ENCODE measurements at regions of chr4 and their contacts with region 1.

Region 1: GRCh38 chr4:122758033-122758432 is 25.5 kb downstream of the BBS12 start:
- DNase-seq: peak in 3 of 4 experiments; percentile 28 to 72 (median 37)
- ATAC-seq: peak; percentile 46
- H3K4me3 ChIP-seq: no peak overlapping the region
- H3K27ac ChIP-seq: peak overlapping the region; percentile 59; the same call in 2 of the 3 replicates
- H3K4me1 ChIP-seq: peaks cover 0 to 11% of the 10 kb centered on the region in 2 experiments; a peak in 3 of 5 replicates
- H3K27me3 ChIP-seq: no peaks in the 10 kb centered on the region
- CTCF ChIP-seq: peak; percentile 47 to 75 (median 53); a peak in 4 of 6 replicates
- EP300 ChIP-seq: no peak
- POLR2A ChIP-seq: no peak
- RAD21 ChIP-seq: peak; percentile 78 to 81

Region 2: GRCh38 chr4:122434285-122434684 is 323.7 kb before region 1 on chr4:
- CTCF ChIA-PET with region 1: no interaction called
- POLR2A ChIA-PET with region 1: no interaction called
- in situ Hi-C with region 1: no loop called
- intact Hi-C with region 1: no loop called
- DNase-seq: no peak
- ATAC-seq: no peak
- H3K4me3 ChIP-seq: no peak overlapping the region
- H3K27ac ChIP-seq: no peak overlapping the region
- H3K4me1 ChIP-seq: no peaks in the 10 kb centered on the region
- H3K27me3 ChIP-seq: no peaks in the 10 kb centered on the region; a peak in 2 of 5 replicates
- CTCF ChIP-seq: no peak
- EP300 ChIP-seq: no peak
- POLR2A ChIP-seq: no peak
- RAD21 ChIP-seq: no peak

Region 3: DNA sequence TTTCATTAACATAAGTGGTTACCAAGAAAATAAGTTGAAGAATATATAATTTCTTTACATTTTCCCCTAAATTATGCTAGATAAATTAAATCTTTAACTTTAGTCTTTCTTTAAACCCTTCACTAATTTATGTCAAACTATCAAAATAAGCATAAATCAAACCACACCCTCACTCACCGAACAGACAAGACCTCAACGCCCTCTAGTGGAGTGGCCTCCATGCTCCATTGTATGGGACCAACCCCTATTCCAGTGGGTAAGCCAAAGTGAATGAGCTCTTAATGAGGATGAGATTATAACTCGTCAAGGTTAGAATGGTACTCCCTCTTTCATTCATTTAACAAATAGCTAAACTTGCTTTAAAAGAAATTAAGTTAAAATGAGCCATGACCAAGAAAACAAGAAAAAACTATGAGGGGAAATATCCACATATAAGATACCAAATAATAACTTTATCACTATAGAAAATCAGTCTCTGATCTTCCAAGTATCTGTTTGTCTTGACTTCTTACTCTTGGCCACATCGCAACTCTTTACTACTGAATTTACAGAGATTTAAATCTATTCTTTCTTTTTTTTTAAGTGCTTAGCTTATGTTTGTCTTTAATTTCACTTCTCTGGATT is 41.1 kb before region 1 on chr4:
- CTCF ChIA-PET with region 1: no interaction called
- POLR2A ChIA-PET with region 1: no interaction called
- in situ Hi-C with region 1: no loop called
- intact Hi-C with region 1: loop called (anchors 5 kb)
- DNase-seq: peak; percentile 75 to 87 (median 80)
- ATAC-seq: peak; percentile 96
- H3K4me3 ChIP-seq: no peak overlapping the region
- H3K27ac ChIP-seq: no peak overlapping the region
- H3K4me1 ChIP-seq: peaks cover 1 to 16% of the 10 kb centered on the region in 2 experiments
- H3K27me3 ChIP-seq: no peaks in the 10 kb centered on the region
- CTCF ChIP-seq: peak; percentile 77 to 90 (median 89)
- EP300 ChIP-seq: no peak
- POLR2A ChIP-seq: no peak
- RAD21 ChIP-seq: peak; percentile 82 to 87

Region 4: GRCh38 chr4:122914292-122914904 is 156.4 kb after region 1 on chr4:
- CTCF ChIA-PET with region 1: interaction called, 8 read pairs
- POLR2A ChIA-PET with region 1: no interaction called
- in situ Hi-C with region 1: no loop called
- intact Hi-C with region 1: loop called (anchors 1 kb)
- DNase-seq: peak in 1 of 4 experiments; percentile 35
- ATAC-seq: peak; percentile 88
- H3K4me3 ChIP-seq: no peak overlapping the region
- H3K27ac ChIP-seq: no peak overlapping the region; the same call in 2 of the 3 replicates
- H3K4me1 ChIP-seq: no peaks in the 10 kb centered on the region
- H3K27me3 ChIP-seq: no peaks in the 10 kb centered on the region
- CTCF ChIP-seq: peak; percentile 32 to 65 (median 33); a peak in 3 of 6 replicates
- EP300 ChIP-seq: no peak
- POLR2A ChIP-seq: no peak
- RAD21 ChIP-seq: peak; percentile 69 to 77

Region 5: GRCh38 chr4:122922877-122923511 is 165.0 kb after region 1 on chr4:
- CTCF ChIA-PET with region 1: no interaction called
- POLR2A ChIA-PET with region 1: interaction called, 3 read pairs
- in situ Hi-C with region 1: loop called (anchors 5 kb)
- intact Hi-C with region 1: loop called (anchors 2 kb)
- DNase-seq: peak; percentile 79 to 95 (median 84)
- ATAC-seq: peak; percentile 91
- H3K4me3 ChIP-seq: peak overlapping the region; percentile 85
- H3K27ac ChIP-seq: peak overlapping the region; percentile 85
- H3K4me1 ChIP-seq: peaks cover 6 to 26% of the 10 kb centered on the region in 2 experiments; a peak in 4 of 5 replicates
- H3K27me3 ChIP-seq: no peaks in the 10 kb centered on the region
- CTCF ChIP-seq: no peak
- EP300 ChIP-seq: peak; percentile 52; the same call in 1 of the 2 replicates
- POLR2A ChIP-seq: peak; percentile 79
- RAD21 ChIP-seq: no peak

Region 6: DNA sequence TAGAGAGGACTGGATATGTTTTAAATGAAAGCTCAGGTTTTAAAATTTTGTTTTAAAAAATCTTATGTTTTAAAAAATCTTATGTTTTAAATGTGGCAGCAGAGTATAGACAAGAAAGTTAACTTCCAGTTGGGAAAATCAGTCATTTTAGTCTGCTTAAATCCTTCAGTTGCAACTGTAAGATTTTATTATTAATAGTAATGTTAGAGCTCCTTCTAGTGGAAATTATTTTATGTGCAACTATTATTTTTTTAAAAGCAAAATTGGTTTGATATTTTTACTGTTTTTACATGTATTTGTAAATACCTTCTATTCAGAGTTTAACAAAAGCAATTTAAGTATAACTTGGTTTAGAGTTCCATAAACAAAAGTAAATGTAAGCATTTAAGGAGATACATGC is 172.8 kb after region 1 on chr4:
- CTCF ChIA-PET with region 1: interaction called, 13 read pairs
- POLR2A ChIA-PET with region 1: no interaction called
- in situ Hi-C with region 1: no loop called
- intact Hi-C with region 1: no loop called
- DNase-seq: no peak
- ATAC-seq: no peak
- H3K4me3 ChIP-seq: no peak overlapping the region
- H3K27ac ChIP-seq: no peak overlapping the region
- H3K4me1 ChIP-seq: peaks cover 0 to 6% of the 10 kb centered on the region in 2 experiments; a peak in 4 of 5 replicates
- H3K27me3 ChIP-seq: no peaks in the 10 kb centered on the region
- CTCF ChIP-seq: peak in 1 of 3 experiments; percentile 70; a peak in 4 of 6 replicates
- EP300 ChIP-seq: no peak
- POLR2A ChIP-seq: no peak
- RAD21 ChIP-seq: peak; percentile 50 to 57

Region 7: GRCh38 chr4:123096038-123096437 is 338.0 kb after region 1 on chr4:
- CTCF ChIA-PET with region 1: no interaction called
- POLR2A ChIA-PET with region 1: interaction called, 3 read pairs
- in situ Hi-C with region 1: no loop called
- intact Hi-C with region 1: loop called (anchors 10 kb)
- DNase-seq: peak; percentile 14 to 44 (median 23)
- ATAC-seq: peak; percentile 88
- H3K4me3 ChIP-seq: no peak overlapping the region
- H3K27ac ChIP-seq: no peak overlapping the region
- H3K4me1 ChIP-seq: no peaks in the 10 kb centered on the region
- H3K27me3 ChIP-seq: no peaks in the 10 kb centered on the region
- CTCF ChIP-seq: peak; percentile 49 to 65 (median 63); a peak in 5 of 6 replicates
- EP300 ChIP-seq: no peak
- POLR2A ChIP-seq: no peak
- RAD21 ChIP-seq: peak in 1 of 2 experiments; percentile 55; a peak in 2 of 4 replicates

Measured in K562 (cell line).